ENCODE measurements at regions of chr2 and their contacts with region 1.

Region 1: GRCh38 chr2:202178342-202178958 is 59.9 kb downstream of the SUMO1 start:
- DNase-seq: no peak
- H3K4me3 ChIP-seq: no peak overlapping the region
- H3K27me3 ChIP-seq: no peaks in the 10 kb centered on the region
- CTCF ChIP-seq: peak; percentile 79

Region 2: DNA sequence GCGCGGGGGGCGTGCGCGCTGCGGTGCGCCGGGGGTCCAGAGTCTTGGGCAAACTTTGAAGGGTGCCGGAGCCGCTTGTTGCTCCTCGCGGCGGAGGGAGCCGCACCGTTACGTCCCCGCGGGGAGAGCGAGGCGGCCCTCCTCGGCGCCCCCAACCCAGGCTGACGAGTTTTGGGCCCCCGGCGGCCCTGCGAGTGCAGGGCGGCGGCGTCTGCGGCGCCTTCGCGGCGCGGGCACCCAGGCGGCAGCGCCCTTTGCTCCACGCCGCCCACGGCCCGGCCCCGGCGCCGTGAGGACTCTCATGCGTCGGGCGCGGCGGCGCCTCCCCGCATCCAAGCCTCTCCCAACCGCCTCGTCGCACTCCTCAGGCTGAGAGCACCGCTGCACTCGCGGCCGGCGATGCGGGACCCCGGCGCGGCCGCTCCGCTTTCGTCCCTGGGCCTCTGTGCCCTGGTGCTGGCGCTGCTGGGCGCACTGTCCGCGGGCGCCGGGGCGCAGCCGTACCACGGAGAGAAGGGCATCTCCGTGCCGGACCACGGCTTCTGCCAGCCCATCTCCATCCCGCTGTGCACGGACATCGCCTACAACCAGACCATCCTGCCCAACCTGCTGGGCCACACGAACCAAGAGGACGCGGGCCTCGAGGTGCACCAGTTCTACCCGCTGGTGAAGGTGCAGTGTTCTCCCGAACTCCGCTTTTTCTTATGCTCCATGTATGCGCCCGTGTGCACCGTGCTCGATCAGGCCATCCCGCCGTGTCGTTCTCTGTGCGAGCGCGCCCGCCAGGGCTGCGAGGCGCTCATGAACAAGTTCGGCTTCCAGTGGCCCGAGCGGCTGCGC is 144.0 kb before region 1 on chr2:
- CTCF ChIA-PET with region 1: interaction called, 20 read pairs
- POLR2A ChIA-PET with region 1: no interaction called
- DNase-seq: no peak
- H3K4me3 ChIP-seq: peak overlapping the region; percentile 91
- H3K27me3 ChIP-seq: no peaks in the 10 kb centered on the region
- CTCF ChIP-seq: no peak

Region 3: DNA sequence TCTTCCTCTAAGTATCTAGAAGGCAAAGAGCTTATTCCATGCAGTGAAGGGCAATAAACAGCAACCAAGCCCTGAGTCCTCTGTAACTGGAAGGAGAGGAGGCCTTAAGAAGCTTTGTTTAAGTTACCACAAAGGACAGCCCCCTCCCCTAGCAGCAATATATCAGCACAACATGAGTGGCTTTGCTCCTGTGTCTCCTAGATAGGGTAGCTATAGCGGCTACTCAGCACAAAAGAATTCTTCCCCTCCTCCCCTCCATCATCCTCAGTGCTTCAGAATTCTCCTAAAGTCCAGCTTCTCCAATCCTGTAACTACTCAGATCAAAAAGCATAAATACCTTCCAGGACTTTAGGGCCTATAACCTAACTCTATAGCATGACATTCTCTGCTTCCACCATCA is 43.4 kb after region 1 on chr2:
- CTCF ChIA-PET with region 1: no interaction called
- POLR2A ChIA-PET with region 1: no interaction called
- DNase-seq: no peak
- H3K4me3 ChIP-seq: no peak overlapping the region
- H3K27me3 ChIP-seq: no peaks in the 10 kb centered on the region
- CTCF ChIP-seq: no peak

Measured in BJ (cell line).